SK-N-SH (cell line): ENCODE measurements at regions of chr1 and their contacts with region 1.

Region 1: DNA sequence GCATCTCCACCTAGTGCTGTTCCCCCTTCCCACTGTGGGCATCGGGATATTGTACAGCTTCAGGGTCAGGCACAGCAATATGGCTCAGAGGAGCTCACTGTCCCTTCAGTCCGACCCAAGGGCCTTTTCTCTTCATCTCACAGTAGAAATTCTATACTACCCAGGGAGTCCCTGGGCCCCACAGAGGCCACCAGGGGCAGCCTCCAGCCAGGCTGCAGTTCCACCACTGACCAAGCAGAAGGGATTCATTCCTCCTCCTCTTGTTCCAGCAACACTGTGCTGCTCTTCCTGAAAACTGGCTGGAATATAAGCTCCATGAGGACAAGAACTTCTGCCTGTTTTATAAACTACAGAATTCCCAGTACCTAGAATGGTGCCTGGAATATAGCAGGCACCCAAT is 70.5 kb downstream of the CD34 start:
- DNase-seq: no peak
- H3K4me3 ChIP-seq: no peak overlapping the region
- H3K27ac ChIP-seq: no peak overlapping the region
- H3K4me1 ChIP-seq: peaks cover 0 to 3% of the 10 kb centered on the region in 2 experiments; a peak in 1 of 4 replicates
- H3K27me3 ChIP-seq: no peaks in the 10 kb centered on the region
- CTCF ChIP-seq: no peak
- EP300 ChIP-seq: no peak
- RAD21 ChIP-seq: no peak

Region 2: GRCh38 chr1:207828485-207829158 is 11.8 kb before region 1 on chr1:
- CTCF ChIA-PET with region 1: interaction called, 13 read pairs
- POLR2A ChIA-PET with region 1: no interaction called
- DNase-seq: peak; percentile 64
- H3K4me3 ChIP-seq: no peak overlapping the region
- H3K27ac ChIP-seq: no peak overlapping the region
- H3K4me1 ChIP-seq: peaks cover 0 to 18% of the 10 kb centered on the region in 2 experiments; a peak in 2 of 4 replicates
- H3K27me3 ChIP-seq: no peaks in the 10 kb centered on the region
- CTCF ChIP-seq: peak; percentile 69
- EP300 ChIP-seq: no peak
- RAD21 ChIP-seq: peak; percentile 80

Region 3: DNA sequence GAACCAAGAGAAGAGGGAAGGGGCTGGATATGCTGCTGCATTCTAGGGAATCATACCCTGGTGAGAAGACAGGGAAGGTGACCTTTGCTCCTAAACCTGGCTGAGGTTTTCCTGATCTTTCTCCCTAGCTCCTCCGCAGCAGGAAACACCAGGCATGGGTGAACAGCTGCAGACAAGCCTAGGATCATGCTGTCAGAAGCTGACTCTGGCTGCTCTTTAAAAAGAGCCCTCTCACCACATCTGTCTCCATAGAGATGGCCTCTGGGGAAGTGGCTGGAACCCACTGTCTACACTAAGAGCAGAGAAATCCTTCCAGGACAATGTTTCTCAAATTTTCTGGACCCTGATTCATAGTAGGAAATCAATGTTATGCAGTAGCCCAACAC is 13.0 kb after region 1 on chr1:
- CTCF ChIA-PET with region 1: no interaction called
- POLR2A ChIA-PET with region 1: no interaction called
- DNase-seq: no peak
- H3K4me3 ChIP-seq: no peak overlapping the region
- H3K27ac ChIP-seq: no peak overlapping the region
- H3K4me1 ChIP-seq: no peaks in the 10 kb centered on the region; a peak in 1 of 4 replicates
- H3K27me3 ChIP-seq: no peaks in the 10 kb centered on the region
- CTCF ChIP-seq: no peak
- EP300 ChIP-seq: no peak
- RAD21 ChIP-seq: no peak